CD8-positive, alpha-beta T cell (primary cell): ENCODE measurements at regions of chr1 and their contacts with region 1.

Region 1: DNA sequence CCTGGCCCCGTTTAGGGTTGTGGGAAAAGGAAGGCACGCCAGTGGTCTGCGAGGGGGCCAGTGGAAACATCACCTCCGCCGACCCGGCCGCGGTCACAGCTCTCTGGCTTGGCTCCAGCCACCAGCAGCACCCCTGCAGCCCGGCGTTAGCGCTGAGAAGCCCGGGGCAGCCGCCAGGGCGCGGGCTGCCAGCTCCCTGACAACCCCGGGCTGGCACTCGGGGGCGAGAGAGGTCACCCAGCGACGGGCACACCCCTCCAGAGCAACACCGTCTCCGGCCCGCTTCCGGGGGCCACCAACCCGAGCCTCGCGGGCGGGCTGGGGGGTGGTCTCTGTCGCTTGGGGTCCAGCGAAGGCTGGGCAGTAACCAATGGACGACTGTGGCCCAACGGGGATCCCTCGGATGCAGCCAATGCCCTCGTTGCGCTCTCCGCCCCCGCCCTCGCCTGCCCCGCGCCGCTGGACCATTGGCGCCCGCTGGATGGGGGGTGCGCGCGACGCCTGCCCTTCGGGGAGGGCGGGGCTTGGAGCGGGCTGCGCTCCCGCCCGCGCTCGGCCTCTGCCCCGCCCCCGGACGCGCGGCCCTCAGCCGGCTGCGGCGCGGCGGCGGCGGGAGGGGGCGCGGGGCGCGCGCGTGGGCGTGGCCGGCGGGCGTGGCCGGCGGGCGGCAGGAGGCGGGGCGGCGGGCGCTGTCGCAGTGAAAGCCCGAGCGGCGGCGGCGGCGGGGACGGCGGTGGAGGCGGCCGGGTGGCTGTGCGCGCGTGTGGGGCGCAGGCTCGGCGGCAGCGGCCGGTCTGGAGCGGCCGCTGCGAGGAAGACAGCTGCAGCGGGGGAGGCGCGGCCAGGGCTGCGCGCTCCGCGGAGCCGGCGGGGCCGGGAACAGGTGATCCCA is at the start of gene MAN1C1:
- DNase-seq: peak; percentile 70 to 93 (median 81)
- ATAC-seq: peak; percentile 76
- H3K4me3 ChIP-seq: peak within 1 kb of the TSS; percentile 64 to 74
- H3K4me3 Mint-ChIP-seq: peak within 1 kb of the TSS; percentile 83
- H3K27ac ChIP-seq: peak within 1 kb of the TSS; percentile 58 to 74
- H3K27ac Mint-ChIP-seq: peak within 1 kb of the TSS; percentile 49
- H3K4me1 ChIP-seq: peaks cover 48% of the 10 kb centered on the region
- H3K4me1 Mint-ChIP-seq: peaks cover 52% of the 10 kb centered on the region
- H3K27me3 ChIP-seq: no peaks in the 10 kb centered on the region
- H3K27me3 Mint-ChIP-seq: no peaks in the 10 kb centered on the region
- CTCF ChIP-seq: no peak
- total RNA-seq, gene MAN1C1: 24.6 to 25.7 TPM

Region 2: DNA sequence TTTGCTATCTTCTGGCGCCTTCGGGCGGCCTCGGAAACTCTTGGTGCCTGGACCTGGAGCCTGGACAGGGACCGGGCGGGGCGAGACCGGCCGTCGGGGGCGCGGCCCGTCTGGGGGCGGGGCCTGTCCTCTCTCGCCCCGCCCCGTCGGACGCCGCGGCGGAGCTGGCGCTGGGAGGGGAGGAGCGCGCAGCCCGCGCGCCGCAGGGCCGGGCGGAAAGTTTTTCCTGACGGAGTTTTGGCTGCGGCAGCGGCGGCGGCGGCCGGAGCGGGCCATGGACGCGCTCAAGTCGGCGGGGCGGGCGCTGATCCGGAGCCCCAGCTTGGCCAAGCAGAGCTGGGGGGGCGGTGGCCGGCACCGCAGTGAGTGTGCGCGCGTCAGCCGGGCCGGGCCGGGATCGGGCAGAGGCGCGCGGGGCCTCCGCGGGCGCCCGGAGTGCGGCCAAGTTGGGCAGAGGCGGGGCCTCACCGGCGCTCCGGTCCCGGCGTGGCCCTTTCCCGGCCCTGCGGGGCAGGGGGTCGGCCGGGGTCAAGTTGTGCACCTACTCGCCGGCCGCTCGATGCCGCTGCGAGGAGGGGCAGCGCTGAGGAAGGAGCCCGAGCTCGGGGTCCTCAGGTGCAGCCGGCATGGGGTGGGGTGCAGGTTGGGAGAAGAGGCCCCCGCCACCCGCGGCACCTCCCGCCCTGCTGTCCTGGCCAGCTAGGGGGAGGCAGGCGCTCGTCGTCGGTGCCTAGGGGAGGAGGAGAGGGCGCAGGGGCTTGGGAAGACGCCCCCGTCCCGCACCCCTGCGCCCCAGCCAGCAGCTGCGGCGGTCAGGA is 72.7 kb before region 1 on chr1 and contains the start of gene LDLRAP1:
- CTCF ChIA-PET with region 1: interaction called, 4 read pairs
- POLR2A ChIA-PET with region 1: no interaction called
- intact Hi-C with region 1: loop called in 1 of 2 experiments (anchors 2 kb)
- DNase-seq: peak; percentile 22 to 79 (median 56)
- ATAC-seq: peak; percentile 72
- H3K4me3 ChIP-seq: peak within 1 kb of the TSS; percentile 50 to 62
- H3K4me3 Mint-ChIP-seq: peak within 1 kb of the TSS; percentile 94
- H3K27ac ChIP-seq: peak within 1 kb of the TSS; percentile 16 to 56
- H3K27ac Mint-ChIP-seq: peak within 1 kb of the TSS; percentile 91
- H3K4me1 ChIP-seq: peaks cover 42% of the 10 kb centered on the region
- H3K4me1 Mint-ChIP-seq: peaks cover 49% of the 10 kb centered on the region
- H3K27me3 ChIP-seq: no peaks in the 10 kb centered on the region
- H3K27me3 Mint-ChIP-seq: no peaks in the 10 kb centered on the region
- CTCF ChIP-seq: no peak
- total RNA-seq, gene LDLRAP1: 46.1 to 49.5 TPM

Region 3: DNA sequence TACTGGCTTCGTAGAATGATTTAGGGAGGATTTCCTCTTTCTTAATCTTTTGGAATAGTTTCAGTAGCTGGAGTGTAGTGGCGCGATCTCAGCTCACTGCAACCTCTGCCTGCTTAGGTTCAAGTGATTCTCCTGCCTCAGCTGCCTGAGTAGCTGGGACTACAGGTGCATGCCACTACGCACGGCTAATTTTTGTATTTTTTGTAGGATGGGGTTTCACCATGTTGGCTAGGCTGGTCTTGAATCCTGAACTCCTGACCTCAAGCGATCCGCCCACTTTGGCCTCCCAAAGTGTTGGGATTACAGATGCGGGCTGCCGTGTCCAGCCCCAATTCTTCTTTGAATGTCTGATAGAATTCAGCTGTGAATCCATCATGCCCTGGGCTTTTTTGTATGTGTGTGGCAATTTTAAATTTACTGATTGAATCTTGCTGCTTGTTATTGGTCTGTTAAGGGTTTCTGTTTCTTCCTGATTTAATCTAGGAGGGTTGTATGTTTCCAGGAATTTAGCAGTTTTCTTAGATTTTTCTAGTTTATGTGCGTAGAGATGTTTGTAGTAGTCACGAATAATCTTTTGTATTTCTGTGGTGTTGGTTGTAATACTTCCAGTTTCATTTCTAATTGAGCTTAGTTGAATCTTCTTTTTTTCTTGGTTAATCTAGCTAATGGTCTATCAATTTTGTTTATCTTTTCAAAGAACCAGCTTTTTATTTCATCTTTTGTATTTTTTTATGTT is 15.6 kb after region 1 on chr1:
- CTCF ChIA-PET with region 1: interaction called, 13 read pairs
- POLR2A ChIA-PET with region 1: interaction called, 5 read pairs
- intact Hi-C with region 1: no loop called
- DNase-seq: peak in 2 of 9 experiments; percentile 30 to 47
- ATAC-seq: peak; percentile 45
- H3K4me3 ChIP-seq: peak overlapping the region; percentile 28 to 31
- H3K4me3 Mint-ChIP-seq: peak overlapping the region; percentile 86
- H3K27ac ChIP-seq: peak overlapping the region; percentile 44 to 48
- H3K27ac Mint-ChIP-seq: peak overlapping the region; percentile 95
- H3K4me1 ChIP-seq: peaks cover 49% of the 10 kb centered on the region
- H3K4me1 Mint-ChIP-seq: peaks cover 66% of the 10 kb centered on the region
- H3K27me3 ChIP-seq: no peaks in the 10 kb centered on the region
- H3K27me3 Mint-ChIP-seq: no peaks in the 10 kb centered on the region
- CTCF ChIP-seq: no peak

Region 4: GRCh38 chr1:25675729-25676476 is 59.6 kb after region 1 on chr1:
- CTCF ChIA-PET with region 1: interaction called, 7 read pairs
- POLR2A ChIA-PET with region 1: interaction called, 20 read pairs
- intact Hi-C with region 1: loop called (anchors 2 kb)
- DNase-seq: peak; percentile 36 to 90 (median 74)
- ATAC-seq: peak; percentile 80
- H3K4me3 ChIP-seq: peak overlapping the region; percentile 14 to 41
- H3K4me3 Mint-ChIP-seq: peak overlapping the region; percentile 80
- H3K27ac ChIP-seq: peak overlapping the region; percentile 38 to 45
- H3K27ac Mint-ChIP-seq: peak overlapping the region; percentile 94
- H3K4me1 ChIP-seq: peaks cover 71% of the 10 kb centered on the region
- H3K4me1 Mint-ChIP-seq: peaks cover 88% of the 10 kb centered on the region
- H3K27me3 ChIP-seq: no peaks in the 10 kb centered on the region
- H3K27me3 Mint-ChIP-seq: no peaks in the 10 kb centered on the region
- CTCF ChIP-seq: no peak

Region 5: DNA sequence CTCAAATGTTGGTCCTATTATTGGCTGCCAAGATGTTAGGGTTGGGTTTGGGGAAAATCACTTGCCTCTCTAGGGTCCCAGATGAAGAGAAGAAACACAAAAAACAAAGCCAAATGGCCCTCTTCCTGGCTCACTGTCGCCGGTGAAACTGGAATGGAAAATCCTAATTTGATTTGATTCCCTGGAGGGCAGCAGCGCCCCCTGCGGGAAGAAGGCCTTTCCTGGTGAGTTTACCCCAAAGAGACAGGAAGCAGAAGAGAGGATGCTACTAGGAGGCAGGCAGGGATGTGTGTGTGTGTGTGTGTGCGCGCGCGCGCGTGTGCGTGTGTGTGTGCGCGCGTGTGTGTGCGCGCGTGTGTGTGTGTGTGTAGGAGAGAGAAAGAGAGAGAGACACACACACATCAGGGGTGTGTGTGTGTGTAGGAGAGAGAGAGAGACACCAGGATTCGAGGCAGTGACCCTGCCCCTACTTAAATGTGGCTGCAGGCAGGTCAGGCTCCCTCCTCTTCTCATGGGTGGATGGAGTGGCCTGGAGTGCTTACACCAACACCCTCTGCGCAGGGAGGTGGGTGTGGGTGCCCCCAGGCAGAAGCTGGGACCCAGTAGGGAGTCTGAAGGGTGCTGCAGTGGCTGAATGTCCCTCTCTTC is 180.6 kb after region 1 on chr1:
- CTCF ChIA-PET with region 1: interaction called, 68 read pairs
- POLR2A ChIA-PET with region 1: interaction called, 7 read pairs
- intact Hi-C with region 1: loop called (anchors 1 to 2 kb)
- DNase-seq: peak; percentile 64 to 89 (median 86)
- ATAC-seq: peak; percentile 48
- H3K4me3 ChIP-seq: peak overlapping the region in 1 of 2 experiments; percentile 12
- H3K4me3 Mint-ChIP-seq: peak overlapping the region; percentile 75
- H3K27ac ChIP-seq: peak overlapping the region; percentile 33 to 62
- H3K27ac Mint-ChIP-seq: peak overlapping the region; percentile 97
- H3K4me1 ChIP-seq: peaks cover 52% of the 10 kb centered on the region
- H3K4me1 Mint-ChIP-seq: peaks cover 70% of the 10 kb centered on the region
- H3K27me3 ChIP-seq: no peaks in the 10 kb centered on the region
- H3K27me3 Mint-ChIP-seq: no peaks in the 10 kb centered on the region
- CTCF ChIP-seq: peak; percentile 62

Region 6: DNA sequence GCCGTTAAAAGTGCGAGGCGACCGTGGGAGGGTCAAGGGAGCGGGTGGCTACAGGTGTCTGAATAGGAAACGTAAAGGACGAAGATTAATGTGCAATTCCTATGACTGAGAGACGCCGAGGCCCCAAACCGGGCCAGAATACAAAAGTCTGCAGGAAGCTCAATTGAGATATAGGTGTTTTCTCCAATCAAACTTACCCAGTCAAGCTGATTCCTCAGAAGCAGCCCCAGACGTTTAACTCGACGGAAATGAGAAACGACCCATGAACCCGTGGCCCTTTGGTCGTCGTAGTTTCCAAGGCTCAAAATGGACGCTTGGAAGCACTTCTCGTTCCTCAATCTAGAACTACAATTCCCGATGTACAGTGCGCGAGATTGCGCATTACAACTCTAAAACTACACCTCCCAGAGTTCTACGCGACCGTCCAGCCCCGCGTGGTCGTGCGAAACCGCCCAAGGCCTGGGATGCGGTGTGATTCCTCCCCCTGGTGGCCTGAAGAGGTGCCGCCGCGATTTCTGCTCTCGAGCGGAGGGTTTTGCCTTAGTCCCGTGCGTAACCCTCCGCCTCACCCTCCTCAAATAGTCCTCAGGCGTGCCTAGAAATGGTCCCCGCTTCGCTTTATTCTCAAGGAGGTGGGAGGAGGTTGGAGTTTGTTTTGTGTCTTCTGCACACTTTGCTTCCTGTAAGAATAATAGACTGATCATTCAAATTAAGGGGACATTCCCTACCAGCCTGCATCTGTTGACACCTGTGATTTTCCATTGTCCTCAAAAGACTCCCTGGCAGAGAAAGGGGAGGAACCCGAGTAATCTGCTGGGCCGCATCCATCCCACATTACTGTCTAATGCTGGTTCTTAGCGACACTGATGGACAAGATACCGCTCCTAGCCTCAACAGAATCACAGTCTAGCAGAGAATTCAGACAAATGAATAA is 381.8 kb after region 1 on chr1 and contains the start of gene PAFAH2:
- CTCF ChIA-PET with region 1: no interaction called
- POLR2A ChIA-PET with region 1: no interaction called
- intact Hi-C with region 1: loop called in 1 of 2 experiments (anchors 5 kb)
- DNase-seq: peak; percentile 93 to 100 (median 96)
- ATAC-seq: peak; percentile 96
- H3K4me3 ChIP-seq: peak within 1 kb of the TSS; percentile 62 to 72
- H3K4me3 Mint-ChIP-seq: peak within 1 kb of the TSS; percentile 92
- H3K27ac ChIP-seq: peak within 1 kb of the TSS; percentile 79 to 87
- H3K27ac Mint-ChIP-seq: peak within 1 kb of the TSS; percentile 99
- H3K4me1 ChIP-seq: peaks cover 19% of the 10 kb centered on the region
- H3K4me1 Mint-ChIP-seq: peaks cover 42% of the 10 kb centered on the region
- H3K27me3 ChIP-seq: no peaks in the 10 kb centered on the region
- H3K27me3 Mint-ChIP-seq: no peaks in the 10 kb centered on the region
- CTCF ChIP-seq: peak; percentile 92
- total RNA-seq, gene PAFAH2: 9.1 to 11.8 TPM

Region 7: DNA sequence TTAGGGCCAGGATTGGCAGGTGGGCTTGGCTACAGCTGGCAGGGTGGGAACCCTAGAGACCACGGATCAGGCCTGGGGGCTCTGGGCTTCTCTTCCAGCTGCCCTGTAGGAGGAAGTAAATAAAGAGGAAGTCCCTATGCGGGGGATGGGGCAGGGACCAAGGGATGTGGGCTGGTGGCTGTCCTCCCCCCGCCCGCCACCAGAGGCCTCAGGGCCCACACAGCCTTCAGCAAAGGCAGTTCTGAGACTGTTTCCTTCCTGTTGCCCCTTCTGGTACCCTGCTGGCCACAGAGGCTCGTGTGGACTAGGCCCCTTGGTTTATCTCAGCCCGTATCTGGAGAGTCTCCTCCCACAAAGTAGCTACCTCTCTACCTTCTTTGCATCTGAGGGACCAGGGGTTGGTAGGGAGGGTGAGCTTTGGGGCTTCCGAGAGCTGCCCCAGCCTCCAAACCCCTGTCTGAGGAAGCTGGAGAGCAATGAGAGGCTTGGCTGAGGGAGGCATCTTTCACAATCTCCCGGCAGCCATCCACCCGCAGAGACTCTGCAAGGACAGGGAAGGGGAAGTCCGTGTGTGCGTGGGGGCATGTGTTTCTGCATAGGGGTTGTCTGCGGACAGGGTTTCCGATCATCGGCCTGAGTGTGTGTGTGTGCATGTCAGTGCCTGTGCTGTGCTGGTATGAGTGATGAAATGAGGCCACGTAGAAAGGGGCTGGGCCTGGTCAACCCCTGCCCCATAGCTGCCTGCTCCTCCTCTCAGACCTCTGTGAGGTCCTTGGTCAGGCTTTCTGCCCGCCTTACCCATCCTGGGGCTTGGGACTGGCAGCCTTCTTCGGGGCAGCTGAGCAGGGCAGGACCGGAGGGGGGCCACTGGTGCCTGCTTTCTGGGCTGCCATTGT is 925.7 kb after region 1 on chr1:
- CTCF ChIA-PET with region 1: no interaction called
- POLR2A ChIA-PET with region 1: no interaction called
- intact Hi-C with region 1: no loop called
- DNase-seq: peak; percentile 45 to 90 (median 76)
- ATAC-seq: peak; percentile 71
- H3K4me3 ChIP-seq: peak overlapping the region; percentile 32 to 36
- H3K4me3 Mint-ChIP-seq: peak overlapping the region; percentile 81
- H3K27ac ChIP-seq: peak overlapping the region; percentile 56 to 85
- H3K27ac Mint-ChIP-seq: peak overlapping the region; percentile 97
- H3K4me1 ChIP-seq: peaks cover 87% of the 10 kb centered on the region
- H3K4me1 Mint-ChIP-seq: peaks cover 88% of the 10 kb centered on the region
- H3K27me3 ChIP-seq: no peaks in the 10 kb centered on the region
- H3K27me3 Mint-ChIP-seq: no peaks in the 10 kb centered on the region
- CTCF ChIP-seq: peak; percentile 65

Region 8: GRCh38 chr1:26907071-26907917 is 1291.0 kb after region 1 on chr1:
- CTCF ChIA-PET with region 1: no interaction called
- POLR2A ChIA-PET with region 1: no interaction called
- intact Hi-C with region 1: no loop called
- DNase-seq: no peak
- ATAC-seq: no peak
- H3K4me3 ChIP-seq: no peak overlapping the region
- H3K4me3 Mint-ChIP-seq: no peak overlapping the region
- H3K27ac ChIP-seq: no peak overlapping the region
- H3K27ac Mint-ChIP-seq: no peak overlapping the region
- H3K4me1 ChIP-seq: no peaks in the 10 kb centered on the region
- H3K4me1 Mint-ChIP-seq: no peaks in the 10 kb centered on the region
- H3K27me3 ChIP-seq: peaks cover 0 to 2% of the 10 kb centered on the region in 2 experiments
- H3K27me3 Mint-ChIP-seq: no peaks in the 10 kb centered on the region
- CTCF ChIP-seq: no peak